ENCODE measurements at regions of chr9 and their contacts with region 1.

Region 1: DNA sequence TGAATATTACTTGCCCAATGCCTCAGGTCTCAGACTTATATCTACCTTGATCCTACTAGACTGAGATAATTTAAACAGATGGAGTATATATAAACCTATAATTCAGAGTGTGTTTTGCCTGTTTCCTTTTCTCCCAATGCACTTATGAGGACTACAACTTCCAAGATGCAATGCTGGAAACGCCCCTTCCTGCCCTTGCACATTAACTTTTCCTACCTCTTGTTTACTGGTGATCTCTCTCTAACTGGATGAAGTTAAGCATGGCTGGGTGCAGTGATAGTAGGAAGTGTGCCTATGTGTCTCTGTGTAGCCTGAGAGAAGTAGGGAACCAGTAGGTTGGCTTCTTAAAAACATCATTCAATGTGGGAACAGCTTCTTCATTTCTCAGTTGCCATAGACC is 115.2 kb downstream of the SVEP1 start:
- DNase-seq: no peak
- ATAC-seq: peak; percentile 35; the same call in 1 of the 2 replicates
- H3K4me3 ChIP-seq: no peak overlapping the region
- H3K27ac ChIP-seq: no peak overlapping the region
- H3K4me1 ChIP-seq: no peaks in the 10 kb centered on the region
- H3K27me3 ChIP-seq: no peaks in the 10 kb centered on the region
- CTCF ChIP-seq: no peak
- POLR2A ChIP-seq: no peak
- RAD21 ChIP-seq: no peak

Region 2: DNA sequence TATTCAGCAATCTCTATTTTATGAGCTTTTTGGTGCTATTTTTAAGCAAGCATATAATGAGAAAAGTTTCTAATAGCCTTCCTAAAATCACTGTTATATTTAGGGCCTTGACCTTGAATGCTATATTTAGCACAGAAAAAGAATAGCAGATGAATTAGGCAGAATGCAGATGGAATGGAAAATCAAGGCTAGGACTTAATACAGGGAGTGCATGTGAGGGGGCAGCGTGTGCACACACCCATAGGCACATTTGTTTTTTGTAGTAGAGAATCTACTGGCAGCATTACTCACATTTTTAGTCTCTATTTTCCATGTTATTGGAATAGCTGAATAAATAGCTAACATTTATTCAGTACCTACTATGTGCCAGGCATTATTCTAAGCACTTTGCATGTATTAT is 35.3 kb after region 1 on chr9:
- CTCF ChIA-PET with region 1: no interaction called
- POLR2A ChIA-PET with region 1: no interaction called
- dilution Hi-C with region 1: no loop called
- in situ Hi-C with region 1: no loop called
- intact Hi-C with region 1: loop called (anchors 5 kb)
- DNase-seq: no peak
- ATAC-seq: no peak
- H3K4me3 ChIP-seq: no peak overlapping the region
- H3K27ac ChIP-seq: no peak overlapping the region
- H3K4me1 ChIP-seq: no peaks in the 10 kb centered on the region
- H3K27me3 ChIP-seq: no peaks in the 10 kb centered on the region
- CTCF ChIP-seq: no peak
- POLR2A ChIP-seq: no peak
- RAD21 ChIP-seq: no peak

Region 3: GRCh38 chr9:110512817-110513216 is 48.5 kb after region 1 on chr9:
- CTCF ChIA-PET with region 1: no interaction called
- POLR2A ChIA-PET with region 1: no interaction called
- dilution Hi-C with region 1: no loop called
- in situ Hi-C with region 1: no loop called
- intact Hi-C with region 1: loop called (anchors 2 kb)
- DNase-seq: no peak
- ATAC-seq: no peak
- H3K4me3 ChIP-seq: no peak overlapping the region
- H3K27ac ChIP-seq: no peak overlapping the region
- H3K4me1 ChIP-seq: no peaks in the 10 kb centered on the region
- H3K27me3 ChIP-seq: no peaks in the 10 kb centered on the region
- CTCF ChIP-seq: no peak
- POLR2A ChIP-seq: no peak
- RAD21 ChIP-seq: no peak

Region 4: DNA sequence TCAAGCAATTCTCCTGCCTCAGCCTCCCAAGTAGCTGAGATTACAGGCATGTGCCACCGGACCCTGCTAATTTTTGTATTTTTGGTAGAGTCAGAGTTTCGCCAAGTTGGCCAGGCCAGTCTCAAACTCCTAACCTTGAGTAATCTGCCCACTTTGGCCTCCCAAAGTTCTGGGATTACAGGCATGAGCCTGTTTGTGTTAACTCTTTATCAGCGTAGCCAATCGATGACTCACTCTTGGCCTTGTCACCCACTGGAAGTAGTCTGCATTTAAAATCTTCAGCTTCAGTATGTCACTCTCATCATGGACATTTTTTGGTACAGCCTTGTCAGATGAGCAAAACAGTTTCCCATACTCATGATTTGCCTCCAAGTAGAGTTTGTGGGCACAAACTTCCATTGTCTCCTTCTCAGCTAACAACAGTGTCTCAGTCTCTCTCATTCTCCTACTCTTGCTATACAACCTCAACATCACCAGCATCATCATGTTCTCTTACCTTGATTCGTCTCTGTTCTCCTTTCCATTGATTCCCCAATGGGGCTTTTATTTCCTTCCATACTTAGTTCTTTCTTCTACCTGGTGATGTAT is 226.7 kb after region 1 on chr9:
- CTCF ChIA-PET with region 1: no interaction called
- POLR2A ChIA-PET with region 1: no interaction called
- dilution Hi-C with region 1: no loop called
- in situ Hi-C with region 1: no loop called
- intact Hi-C with region 1: no loop called
- DNase-seq: peak; percentile 35
- ATAC-seq: no peak
- H3K4me3 ChIP-seq: no peak overlapping the region
- H3K27ac ChIP-seq: no peak overlapping the region
- H3K4me1 ChIP-seq: no peaks in the 10 kb centered on the region
- H3K27me3 ChIP-seq: no peaks in the 10 kb centered on the region
- CTCF ChIP-seq: no peak
- POLR2A ChIP-seq: no peak
- RAD21 ChIP-seq: no peak